ENCODE measurements at regions of chr1 and their contacts with region 1.

Region 1: DNA sequence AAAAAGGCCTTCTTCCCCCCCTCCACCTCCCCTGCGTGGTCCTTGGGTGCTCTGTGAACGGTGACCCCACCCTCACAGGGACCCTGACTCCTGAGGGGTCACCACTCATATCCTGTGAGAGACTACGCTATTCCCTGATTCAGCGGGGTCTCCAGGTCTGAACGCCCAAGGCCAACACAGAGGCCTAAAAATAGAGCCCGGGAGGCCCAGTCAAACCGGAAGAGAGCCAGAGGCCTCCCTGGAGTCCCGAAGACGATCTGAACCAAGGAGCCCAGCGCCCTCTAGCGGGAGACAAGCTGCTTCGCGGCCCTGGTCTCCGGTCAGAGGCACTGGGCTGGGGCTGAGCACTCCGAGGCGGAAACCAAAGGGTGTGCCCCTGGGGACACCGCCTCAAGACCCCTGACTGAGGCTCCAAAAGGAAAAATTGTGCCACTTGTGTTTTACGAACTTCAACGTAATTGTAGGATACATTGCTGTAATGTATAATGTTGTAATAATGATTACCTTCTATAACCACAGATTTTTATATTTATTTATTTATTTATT is 42.4 kb upstream of the PSEN2 start:
- DNase-seq: peak; percentile 88
- H3K4me3 ChIP-seq: peak overlapping the region in 1 of 2 experiments; percentile 16; a peak in 1 of 4 replicates
- H3K27ac ChIP-seq: no peak overlapping the region
- H3K4me1 ChIP-seq: peaks cover 0 to 2% of the 10 kb centered on the region in 2 experiments; a peak in 1 of 4 replicates
- H3K27me3 ChIP-seq: no peaks in the 10 kb centered on the region; the same call in 1 of the 2 replicates
- CTCF ChIP-seq: peak; percentile 92
- EP300 ChIP-seq: no peak
- RAD21 ChIP-seq: peak; percentile 93

Region 2: DNA sequence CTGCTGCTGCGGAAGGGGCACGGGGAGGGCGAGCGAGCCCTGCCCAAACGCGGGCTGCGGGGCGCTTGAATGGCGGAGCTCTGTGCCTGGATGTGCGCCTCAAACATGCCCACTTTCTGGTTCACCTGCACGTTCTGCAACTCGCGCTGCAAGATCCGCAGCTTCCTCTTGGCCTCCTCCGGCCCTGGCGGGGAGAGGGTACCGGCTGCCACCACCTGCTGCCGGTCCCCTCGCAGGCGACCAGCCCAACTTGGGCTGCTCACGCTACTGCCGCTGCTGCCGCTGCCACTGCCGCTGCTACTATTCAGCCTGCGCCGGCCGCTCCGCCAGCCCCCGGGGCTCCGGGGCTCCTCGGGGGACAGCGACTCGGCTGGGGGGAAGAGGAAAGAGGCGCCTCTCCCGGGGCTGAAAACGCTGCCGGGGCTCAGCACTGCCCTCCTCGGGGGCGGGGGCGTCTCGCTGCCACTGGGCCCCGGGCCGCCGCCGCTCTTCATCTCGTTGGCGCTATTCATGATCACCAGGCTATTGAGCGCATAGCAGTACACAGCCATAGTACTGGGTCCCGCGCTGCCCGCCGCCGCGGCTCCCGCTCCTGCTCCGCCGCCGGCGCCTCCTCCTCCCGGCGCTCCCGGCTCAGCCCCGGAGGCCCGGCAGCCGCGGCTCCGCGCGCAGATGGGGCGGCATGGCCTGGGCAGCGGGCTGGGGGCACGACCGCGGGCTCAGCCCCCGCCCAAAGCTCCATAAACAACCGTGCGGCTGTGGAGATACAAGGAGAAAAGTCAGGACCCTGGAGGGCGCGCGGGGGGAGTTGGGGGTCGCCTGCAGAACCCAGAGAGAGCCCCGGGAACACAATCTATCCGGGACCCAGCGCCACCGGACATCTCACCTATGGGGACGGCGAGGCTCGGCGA is 90.9 kb before region 1 on chr1:
- CTCF ChIA-PET with region 1: interaction called, 13 read pairs
- POLR2A ChIA-PET with region 1: no interaction called
- DNase-seq: peak; percentile 80
- H3K4me3 ChIP-seq: peak overlapping the region; percentile 65 to 80
- H3K27ac ChIP-seq: no peak overlapping the region
- H3K4me1 ChIP-seq: peaks cover 4 to 13% of the 10 kb centered on the region in 2 experiments; a peak in 3 of 4 replicates
- H3K27me3 ChIP-seq: no peaks in the 10 kb centered on the region
- CTCF ChIP-seq: no peak
- EP300 ChIP-seq: no peak
- RAD21 ChIP-seq: no peak

Region 3: GRCh38 chr1:226798427-226799411 is 29.3 kb before region 1 on chr1:
- CTCF ChIA-PET with region 1: no interaction called
- POLR2A ChIA-PET with region 1: no interaction called
- DNase-seq: no peak
- H3K4me3 ChIP-seq: no peak overlapping the region
- H3K27ac ChIP-seq: no peak overlapping the region
- H3K4me1 ChIP-seq: no peaks in the 10 kb centered on the region
- H3K27me3 ChIP-seq: no peaks in the 10 kb centered on the region
- CTCF ChIP-seq: no peak
- EP300 ChIP-seq: no peak
- RAD21 ChIP-seq: no peak